ENCODE measurements at regions of chr9 and their contacts with region 1.

Region 1: DNA sequence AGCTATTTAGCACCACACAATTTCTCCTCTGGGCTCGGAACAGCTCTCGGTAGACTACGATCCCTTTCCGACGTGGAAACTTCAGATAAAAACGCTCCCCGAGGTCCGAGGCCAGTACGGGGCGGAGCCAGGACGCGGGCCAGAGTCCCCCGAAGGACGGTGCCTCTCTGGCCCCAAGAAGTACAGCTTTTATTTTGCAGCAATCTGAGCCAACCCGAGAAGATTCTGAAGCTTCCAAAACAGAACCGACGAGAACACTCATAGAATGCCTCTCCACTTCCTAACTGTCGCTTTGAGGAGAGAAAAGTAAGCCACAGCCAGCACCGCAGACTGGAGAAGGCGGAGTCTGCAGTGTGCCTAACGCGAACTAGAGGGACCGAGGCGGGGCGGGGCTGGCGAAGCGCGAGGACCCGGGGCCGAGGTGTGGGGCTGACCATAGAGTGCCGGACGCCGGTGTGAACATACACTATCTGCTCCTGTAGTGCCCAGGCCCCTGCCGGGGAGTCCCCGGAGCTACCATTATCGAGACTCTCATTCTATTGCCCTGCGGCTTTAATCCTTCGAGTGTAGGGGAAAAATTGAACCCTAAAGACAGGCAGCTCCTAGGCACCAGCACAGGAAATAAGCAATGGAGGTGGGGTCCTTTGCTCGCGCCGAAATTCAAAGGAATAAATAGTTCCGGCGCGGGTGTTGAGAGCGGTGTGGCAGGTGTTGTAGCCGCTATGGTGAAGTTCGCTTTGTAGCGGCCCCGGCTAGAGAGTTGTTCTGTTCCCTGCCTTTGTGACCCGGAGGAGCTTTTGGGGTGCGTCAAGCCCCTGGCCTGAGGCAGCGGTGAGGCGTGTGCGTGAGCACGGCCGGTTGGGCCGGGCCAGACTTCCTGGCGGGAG is at the start of gene SMC2:
- DNase-seq: peak; percentile 96
- ATAC-seq: peak; percentile 93
- H3K4me3 Mint-ChIP-seq: peak within 1 kb of the TSS; percentile 87
- H3K27ac Mint-ChIP-seq: peak within 1 kb of the TSS; percentile 100
- H3K4me1 Mint-ChIP-seq: peaks cover 49% of the 10 kb centered on the region
- H3K27me3 Mint-ChIP-seq: peaks cover 3% of the 10 kb centered on the region
- total RNA-seq, gene SMC2: 79.5 to 81.7 TPM

Region 2: DNA sequence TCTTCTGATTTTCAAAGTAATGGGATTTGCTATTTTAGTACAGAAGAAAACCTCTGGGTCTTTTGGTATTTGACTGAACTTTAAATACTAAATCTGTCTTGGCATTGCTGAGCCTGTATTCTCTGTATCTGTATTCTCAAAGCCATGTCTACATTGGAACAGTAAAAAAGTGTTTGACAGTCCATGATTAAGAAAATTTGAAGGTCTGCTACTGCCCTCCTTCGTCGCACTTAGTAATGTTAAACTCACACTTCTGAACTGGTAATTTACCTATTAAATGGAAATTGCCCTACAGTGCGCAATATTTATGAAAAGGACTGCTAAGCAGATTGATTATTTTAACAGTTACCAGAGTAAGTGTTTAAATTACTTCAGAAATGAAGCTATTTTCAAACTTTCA is 165.4 kb before region 1 on chr9:
- CTCF ChIA-PET with region 1: no interaction called
- POLR2A ChIA-PET with region 1: no interaction called
- DNase-seq: no peak
- ATAC-seq: no peak
- H3K4me3 Mint-ChIP-seq: no peak overlapping the region
- H3K27ac Mint-ChIP-seq: no peak overlapping the region
- H3K4me1 Mint-ChIP-seq: no peaks in the 10 kb centered on the region
- H3K27me3 Mint-ChIP-seq: no peaks in the 10 kb centered on the region

Region 3: GRCh38 chr9:104118916-104119315 is 25.0 kb after region 1 on chr9:
- CTCF ChIA-PET with region 1: interaction called, 5 read pairs
- POLR2A ChIA-PET with region 1: interaction called, 15 read pairs
- DNase-seq: no peak
- ATAC-seq: no peak
- H3K4me3 Mint-ChIP-seq: no peak overlapping the region
- H3K27ac Mint-ChIP-seq: no peak overlapping the region
- H3K4me1 Mint-ChIP-seq: no peaks in the 10 kb centered on the region
- H3K27me3 Mint-ChIP-seq: no peaks in the 10 kb centered on the region

Region 4: GRCh38 chr9:104747558-104748358 is 653.9 kb after region 1 on chr9 and contains the start of gene NIPSNAP3A:
- CTCF ChIA-PET with region 1: interaction called, 3 read pairs
- POLR2A ChIA-PET with region 1: interaction called, 18 read pairs
- DNase-seq: peak; percentile 91
- ATAC-seq: peak; percentile 95
- H3K4me3 Mint-ChIP-seq: peak within 1 kb of the TSS; percentile 96
- H3K27ac Mint-ChIP-seq: peak within 1 kb of the TSS; percentile 99
- H3K4me1 Mint-ChIP-seq: peaks cover 25% of the 10 kb centered on the region
- H3K27me3 Mint-ChIP-seq: no peaks in the 10 kb centered on the region
- total RNA-seq, gene NIPSNAP3A: 24.1 to 24.6 TPM

Measured in activated CD8-positive, alpha-beta T cell treated with anti-CD3 and anti-CD28 coated beads, Interleukin-2, amount 10 ng/mL, durations not matched to agents 7 days and 5 days (primary cell).